Activated B cell treated with CpG ODN at 0.5 μM for 24 hours (primary cell): ENCODE measurements at regions of chr1 and their contacts with region 1.

Region 1: DNA sequence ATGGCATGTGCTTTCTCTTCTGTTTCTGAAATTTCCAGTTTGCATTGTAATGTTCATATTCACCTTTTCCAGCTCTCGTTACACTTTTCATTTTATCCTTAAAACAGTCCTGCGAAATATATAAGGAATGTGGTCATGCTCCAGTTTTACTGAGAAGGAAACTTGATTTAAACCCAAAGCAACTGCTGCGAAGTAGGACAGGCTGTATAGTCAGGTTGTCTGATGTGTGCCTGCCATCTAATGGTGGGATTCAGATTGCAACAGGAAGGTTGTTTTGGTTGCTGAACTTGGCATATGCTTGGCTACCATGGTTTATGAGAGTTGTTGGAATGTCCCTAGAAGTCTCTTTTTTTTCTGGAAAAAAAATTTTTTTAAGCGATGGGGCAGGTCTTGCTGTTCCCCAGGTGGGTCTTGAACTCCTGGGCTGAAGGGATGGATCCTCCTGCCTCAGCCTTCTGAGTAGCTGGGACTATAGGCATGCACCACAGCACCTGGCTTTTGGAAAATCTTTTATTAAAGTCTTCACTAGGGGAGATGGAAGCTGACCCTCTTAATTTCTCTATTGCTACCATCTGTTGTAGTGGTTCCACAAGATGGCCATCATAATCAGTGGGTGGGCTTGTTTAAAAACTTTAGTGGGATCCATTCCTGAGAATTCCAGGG is 86.9 kb downstream of the UCK2 start:
- DNase-seq: peak; percentile 20
- ATAC-seq: peak; percentile 93
- H3K4me3 Mint-ChIP-seq: no peak overlapping the region
- H3K27ac Mint-ChIP-seq: no peak overlapping the region
- H3K4me1 Mint-ChIP-seq: peaks cover 2% of the 10 kb centered on the region
- H3K27me3 Mint-ChIP-seq: no peaks in the 10 kb centered on the region
- CTCF ChIP-seq: peak; percentile 99

Region 2: DNA sequence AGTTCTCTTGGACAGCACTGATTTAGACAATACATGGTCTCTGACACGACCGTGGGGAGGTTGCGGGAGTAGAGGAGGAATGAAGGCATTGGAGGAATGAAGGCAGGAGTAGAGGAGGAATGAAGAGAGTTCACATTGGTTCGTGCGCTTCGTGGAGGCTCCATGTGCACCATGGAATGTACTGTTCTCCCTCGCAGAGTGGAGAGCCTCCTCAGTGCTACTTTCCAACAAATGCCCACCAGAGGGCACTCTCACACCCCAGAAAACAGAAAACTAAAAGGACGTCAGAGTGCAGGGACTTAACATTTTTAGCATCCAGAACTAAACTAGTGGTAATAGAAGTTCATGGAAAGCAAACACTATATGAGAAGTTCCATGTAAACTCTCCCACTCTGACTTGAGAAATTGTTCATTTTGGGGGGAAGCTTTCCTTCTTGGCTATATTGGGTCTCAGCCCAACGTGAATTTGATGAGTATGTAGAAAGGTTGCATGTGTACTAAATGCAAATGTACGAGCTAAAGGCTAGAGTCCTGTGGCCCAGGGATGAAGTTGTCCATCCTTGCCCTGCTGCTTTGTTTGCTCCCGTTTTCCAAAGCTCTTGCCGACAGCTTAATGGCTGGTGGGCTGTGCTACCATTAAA is 769.4 kb before region 1 on chr1:
- CTCF ChIA-PET with region 1: no interaction called
- POLR2A ChIA-PET with region 1: no interaction called
- intact Hi-C with region 1: loop called (anchors 10 kb)
- DNase-seq: no peak
- ATAC-seq: no peak
- H3K4me3 Mint-ChIP-seq: no peak overlapping the region
- H3K27ac Mint-ChIP-seq: no peak overlapping the region
- H3K4me1 Mint-ChIP-seq: no peaks in the 10 kb centered on the region
- H3K27me3 Mint-ChIP-seq: peaks cover 6% of the 10 kb centered on the region
- CTCF ChIP-seq: no peak

Region 3: GRCh38 chr1:165367375-165367993 is 546.8 kb before region 1 on chr1:
- CTCF ChIA-PET with region 1: interaction called, 3 read pairs
- POLR2A ChIA-PET with region 1: no interaction called
- intact Hi-C with region 1: loop called (anchors 10 kb)
- DNase-seq: peak; percentile 51
- ATAC-seq: peak; percentile 75
- H3K4me3 Mint-ChIP-seq: no peak overlapping the region
- H3K27ac Mint-ChIP-seq: no peak overlapping the region
- H3K4me1 Mint-ChIP-seq: peaks cover 3% of the 10 kb centered on the region
- H3K27me3 Mint-ChIP-seq: peaks cover 59% of the 10 kb centered on the region
- CTCF ChIP-seq: no peak

Region 4: DNA sequence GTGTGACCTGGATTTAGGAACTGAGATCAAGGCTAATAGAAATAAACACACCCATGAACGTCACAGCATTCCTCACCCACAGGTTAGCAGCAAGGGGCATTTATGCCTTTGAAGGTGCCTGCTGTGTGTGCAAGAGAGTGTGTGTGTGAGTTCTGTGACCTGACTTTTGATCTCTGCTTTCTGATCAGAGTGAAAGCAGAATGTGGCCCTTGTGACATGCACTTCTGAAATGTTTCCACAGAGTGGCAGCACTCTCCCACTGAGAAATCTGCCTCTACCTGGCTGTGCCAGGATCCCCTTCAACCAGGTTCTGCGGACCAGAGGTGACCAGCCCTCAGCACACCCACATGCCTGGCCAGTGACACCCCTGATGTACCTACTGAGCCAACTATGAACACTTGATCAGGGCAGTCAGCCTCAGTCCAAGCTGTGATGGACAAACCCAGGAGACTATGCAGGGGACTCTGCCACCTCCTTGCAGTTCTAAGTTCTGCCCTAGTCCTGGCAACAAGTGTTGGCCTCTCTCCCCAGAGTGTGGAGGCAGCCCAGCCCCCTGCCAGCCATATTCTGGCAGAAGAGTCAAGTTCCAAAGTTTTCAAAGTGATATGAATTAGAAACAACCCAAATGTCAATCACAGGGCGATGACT is 510.3 kb before region 1 on chr1:
- CTCF ChIA-PET with region 1: no interaction called
- POLR2A ChIA-PET with region 1: no interaction called
- intact Hi-C with region 1: loop called (anchors 1 kb)
- DNase-seq: no peak
- ATAC-seq: peak; percentile 28
- H3K4me3 Mint-ChIP-seq: no peak overlapping the region
- H3K27ac Mint-ChIP-seq: no peak overlapping the region
- H3K4me1 Mint-ChIP-seq: no peaks in the 10 kb centered on the region
- H3K27me3 Mint-ChIP-seq: peaks cover 47% of the 10 kb centered on the region
- CTCF ChIP-seq: no peak

Region 5: DNA sequence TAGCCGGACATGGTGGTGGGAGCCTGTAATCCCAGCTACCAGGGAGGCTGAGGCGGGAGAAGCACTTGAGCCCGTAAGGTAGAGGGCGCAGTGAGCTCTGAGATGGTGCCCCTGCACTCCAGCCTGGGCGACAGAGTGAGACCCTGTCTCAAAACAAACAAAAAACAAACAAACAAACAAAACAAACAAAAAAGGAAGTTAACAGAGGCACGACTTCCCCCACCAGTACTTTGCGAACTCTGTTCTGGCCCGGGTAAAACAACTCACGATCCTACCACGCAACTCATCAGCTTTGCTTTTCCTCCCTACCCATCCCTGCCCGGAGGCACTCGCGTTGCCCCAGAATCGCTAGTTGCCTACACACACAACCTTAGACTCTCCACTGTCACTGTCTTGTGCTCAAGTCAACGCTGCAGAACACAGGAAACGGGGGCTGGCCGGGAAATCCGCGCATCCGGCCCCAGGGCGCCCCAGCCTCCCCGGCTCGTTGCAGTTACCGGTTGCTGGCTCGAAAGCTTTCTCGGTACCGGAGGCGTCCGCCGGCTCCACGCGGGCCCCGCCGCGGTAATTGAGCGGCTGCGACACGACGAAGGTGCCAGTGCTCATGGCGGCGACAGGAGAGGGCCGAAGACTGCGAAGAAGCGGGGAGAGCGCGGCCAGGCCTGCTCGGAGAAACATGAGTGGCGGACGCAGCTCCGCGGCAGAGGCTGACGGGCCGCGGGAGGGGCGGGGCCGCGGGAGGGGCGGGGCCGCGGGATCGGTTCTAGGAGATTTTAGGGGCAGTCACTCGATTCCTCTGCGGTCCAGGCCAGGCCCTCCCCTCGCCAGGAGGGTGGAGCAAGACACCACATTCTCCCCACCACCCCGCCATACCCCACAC is 216.1 kb before region 1 on chr1 and contains the start of gene ALDH9A1:
- CTCF ChIA-PET with region 1: no interaction called
- POLR2A ChIA-PET with region 1: no interaction called
- intact Hi-C with region 1: loop called (anchors 5 kb)
- DNase-seq: peak; percentile 86
- ATAC-seq: peak; percentile 93
- H3K4me3 Mint-ChIP-seq: peak within 1 kb of the TSS; percentile 91
- H3K27ac Mint-ChIP-seq: peak within 1 kb of the TSS; percentile 91
- H3K4me1 Mint-ChIP-seq: peaks cover 27% of the 10 kb centered on the region
- H3K27me3 Mint-ChIP-seq: peaks cover 4% of the 10 kb centered on the region
- CTCF ChIP-seq: no peak
- total RNA-seq, gene ALDH9A1: 30.3 and 35.8 TPM in 2 replicates

Region 6: GRCh38 chr1:165717918-165718515 is 196.2 kb before region 1 on chr1:
- CTCF ChIA-PET with region 1: interaction called, 4 read pairs
- POLR2A ChIA-PET with region 1: no interaction called
- intact Hi-C with region 1: loop called (anchors 1 kb)
- DNase-seq: no peak
- ATAC-seq: peak; percentile 31
- H3K4me3 Mint-ChIP-seq: no peak overlapping the region
- H3K27ac Mint-ChIP-seq: no peak overlapping the region
- H3K4me1 Mint-ChIP-seq: no peaks in the 10 kb centered on the region
- H3K27me3 Mint-ChIP-seq: no peaks in the 10 kb centered on the region
- CTCF ChIP-seq: no peak

Region 7: DNA sequence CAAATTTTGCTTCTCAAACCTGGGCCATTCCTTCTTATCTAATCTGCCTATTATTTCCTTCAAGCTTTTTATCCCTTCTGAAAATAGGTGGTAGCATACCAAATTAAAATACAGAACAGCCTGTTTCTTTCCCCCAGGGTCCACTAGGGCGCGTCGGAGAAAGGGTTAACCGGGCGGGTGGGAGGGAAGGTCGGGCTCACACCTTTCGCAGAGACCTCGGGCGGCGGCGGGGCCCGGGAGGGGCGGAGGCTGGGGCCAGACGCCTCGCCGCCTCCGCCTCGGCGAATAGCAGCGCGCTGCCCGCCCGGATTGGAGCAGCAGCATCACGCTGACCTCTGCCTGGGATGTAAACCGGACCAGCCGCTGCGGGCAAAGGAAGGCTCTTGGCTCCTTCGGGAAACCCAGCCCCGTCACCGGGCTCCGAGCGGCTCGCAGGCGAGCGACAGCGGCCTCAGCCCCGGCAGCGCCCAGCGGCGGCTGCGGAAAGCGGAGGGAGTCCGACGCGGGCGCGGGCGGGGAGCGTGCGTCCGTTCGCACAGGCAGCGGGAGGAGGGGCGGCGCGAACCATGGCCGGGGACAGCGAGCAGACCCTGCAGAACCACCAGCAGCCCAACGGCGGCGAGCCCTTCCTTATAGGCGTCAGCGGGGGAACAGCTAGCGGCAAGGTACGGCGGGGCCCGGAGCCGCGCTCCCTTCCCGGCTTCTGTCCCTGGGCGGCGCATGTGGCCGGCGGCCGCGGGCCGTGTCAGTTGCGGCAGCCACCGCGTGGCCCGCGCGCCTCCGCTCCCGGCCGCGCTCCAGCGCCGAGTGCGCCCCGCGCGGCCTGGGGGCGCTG is 86.8 kb before region 1 on chr1 and contains the start of gene UCK2:
- CTCF ChIA-PET with region 1: interaction called, 4 read pairs
- POLR2A ChIA-PET with region 1: no interaction called
- intact Hi-C with region 1: loop called (anchors 1 kb)
- DNase-seq: peak; percentile 70
- ATAC-seq: peak; percentile 75
- H3K4me3 Mint-ChIP-seq: peak within 1 kb of the TSS; percentile 92
- H3K27ac Mint-ChIP-seq: peak within 1 kb of the TSS; percentile 80
- H3K4me1 Mint-ChIP-seq: peaks cover 21% of the 10 kb centered on the region
- H3K27me3 Mint-ChIP-seq: no peaks in the 10 kb centered on the region
- CTCF ChIP-seq: no peak
- total RNA-seq, gene UCK2: 19.6 and 22.8 TPM in 2 replicates